PC-3 (cell line): ENCODE measurements at regions of chr3 and their contacts with region 1.

Region 1: GRCh38 chr3:196837819-196838420 is 29.8 kb upstream of the SENP5 start:
- DNase-seq: peak; percentile 58
- ATAC-seq: peak; percentile 90
- H3K4me3 ChIP-seq: no peak overlapping the region
- H3K27ac ChIP-seq: no peak overlapping the region
- H3K4me1 ChIP-seq: no peaks in the 10 kb centered on the region
- H3K27me3 ChIP-seq: no peaks in the 10 kb centered on the region
- CTCF ChIP-seq: peak; percentile 86

Region 2: GRCh38 chr3:196902296-196902695 is 64.4 kb after region 1 on chr3:
- CTCF ChIA-PET with region 1: no interaction called
- POLR2A ChIA-PET with region 1: no interaction called
- intact Hi-C with region 1: no loop called
- DNase-seq: no peak
- ATAC-seq: no peak
- H3K4me3 ChIP-seq: no peak overlapping the region
- H3K27ac ChIP-seq: no peak overlapping the region
- H3K4me1 ChIP-seq: no peaks in the 10 kb centered on the region
- H3K27me3 ChIP-seq: no peaks in the 10 kb centered on the region
- CTCF ChIP-seq: no peak

Region 3: GRCh38 chr3:196969660-196970546 is 132.0 kb after region 1 on chr3:
- CTCF ChIA-PET with region 1: no interaction called
- POLR2A ChIA-PET with region 1: no interaction called
- intact Hi-C with region 1: loop called (anchors 2 kb)
- DNase-seq: peak; percentile 76
- ATAC-seq: peak; percentile 77
- H3K4me3 ChIP-seq: peak overlapping the region; percentile 93
- H3K27ac ChIP-seq: no peak overlapping the region
- H3K4me1 ChIP-seq: peaks cover 6% of the 10 kb centered on the region; the same call in 1 of the 2 replicates
- H3K27me3 ChIP-seq: no peaks in the 10 kb centered on the region
- CTCF ChIP-seq: peak; percentile 64